GM10248 (cell line): ENCODE measurements at regions of chr12 and their contacts with region 1.

Region 1: DNA sequence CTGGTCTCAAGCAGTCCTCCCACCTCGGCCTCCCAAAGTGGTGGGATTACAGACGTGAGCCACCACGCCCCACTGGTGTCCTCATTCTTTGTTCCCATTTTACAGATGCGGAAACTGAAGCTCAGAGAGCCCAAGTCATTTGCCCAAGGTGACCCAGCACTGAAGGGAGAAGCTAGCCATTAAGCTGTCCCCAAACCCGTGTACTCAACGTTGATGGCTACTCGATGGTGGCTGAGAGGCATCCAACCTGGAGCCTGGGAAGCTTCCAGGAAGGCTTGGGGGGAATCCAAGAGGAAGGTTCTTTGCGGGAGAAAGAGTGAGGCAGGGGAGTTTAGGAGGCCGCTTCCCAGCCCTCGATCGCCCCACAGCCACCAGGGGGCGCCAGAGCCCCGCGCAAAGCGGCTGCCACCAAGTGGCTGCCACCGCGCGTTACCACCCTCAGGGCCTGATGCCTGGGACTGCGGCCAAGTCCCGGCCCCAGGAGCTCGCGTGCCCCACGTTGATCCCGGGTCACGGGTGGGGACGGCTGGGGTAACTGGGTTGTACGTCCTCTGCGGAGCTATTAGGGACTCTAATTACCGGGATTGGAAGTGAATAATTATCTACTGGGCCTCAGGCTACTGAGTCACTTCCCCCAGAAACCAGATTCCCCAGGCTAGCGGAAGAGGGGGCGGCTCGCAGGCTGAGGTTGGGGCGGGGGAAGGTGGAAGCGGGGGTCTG is 8.8 kb upstream of the SH2B3 start:
- DNase-seq: peak; percentile 87
- CTCF ChIP-seq: peak; percentile 99

Region 2: DNA sequence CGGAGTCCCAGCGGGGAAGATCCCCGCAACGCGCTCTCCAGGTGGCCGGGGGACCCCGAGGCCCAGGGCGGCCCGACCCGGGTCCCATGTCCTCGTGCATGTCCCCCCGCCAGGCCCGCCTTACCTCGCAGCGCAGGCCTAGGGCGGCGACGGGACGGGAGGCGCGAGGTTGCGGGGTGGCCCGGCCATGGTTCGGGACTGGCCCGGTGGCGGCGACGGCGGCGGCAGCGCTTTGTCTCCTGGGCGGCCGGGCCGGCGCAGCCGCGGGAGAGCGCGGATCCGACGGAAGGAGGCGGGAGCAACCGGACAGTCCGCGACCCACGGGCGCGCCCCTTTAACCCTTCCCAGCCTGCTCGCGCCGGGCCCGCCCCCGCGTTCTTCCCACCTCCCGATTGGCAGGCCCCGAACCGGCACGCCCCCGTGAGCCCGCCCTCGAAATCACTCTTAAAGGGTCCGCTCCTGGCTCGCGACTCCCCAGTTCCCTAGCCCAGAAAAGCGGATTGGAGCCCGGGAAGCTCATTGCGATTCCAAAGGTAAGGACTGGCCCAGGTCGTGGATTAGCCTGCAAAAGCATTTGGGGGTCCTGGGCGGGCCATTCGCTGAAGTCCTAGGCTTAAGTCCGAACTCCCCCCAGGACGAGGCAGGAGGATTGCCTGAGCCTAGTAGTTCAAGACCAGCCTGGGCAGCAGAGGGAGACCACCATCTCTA is 27.9 kb before region 1 on chr12 and contains the start of gene PHETA1:
- CTCF ChIA-PET with region 1: interaction called, 30 read pairs
- POLR2A ChIA-PET with region 1: no interaction called
- DNase-seq: peak; percentile 94
- CTCF ChIP-seq: no peak

Region 3: GRCh38 chr12:111386885-111387284 is 10.0 kb before region 1 on chr12:
- CTCF ChIA-PET with region 1: interaction called, 28 read pairs
- POLR2A ChIA-PET with region 1: no interaction called
- DNase-seq: no peak
- CTCF ChIP-seq: no peak

Region 4: DNA sequence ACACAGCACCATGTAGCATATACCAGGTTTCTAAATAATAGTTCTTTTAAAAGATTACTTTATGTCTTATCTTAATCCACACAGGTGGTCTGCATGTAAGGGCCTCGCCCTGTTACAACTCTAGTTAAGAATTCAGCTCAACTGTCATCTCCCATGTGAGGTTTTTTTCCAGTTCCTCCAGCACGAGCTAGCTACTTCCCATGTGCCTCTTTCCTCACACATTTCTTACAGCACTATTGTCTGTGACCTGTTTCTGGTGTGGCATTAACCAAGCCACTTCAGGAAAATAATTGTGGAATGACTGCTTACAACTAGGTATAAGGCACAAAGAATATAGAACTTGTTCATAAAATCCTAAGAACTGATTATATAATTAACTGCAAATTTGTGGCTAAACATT is 74.3 kb after region 1 on chr12:
- CTCF ChIA-PET with region 1: interaction called, 34 read pairs
- POLR2A ChIA-PET with region 1: no interaction called
- DNase-seq: no peak
- CTCF ChIP-seq: no peak

Region 5: GRCh38 chr12:111488271-111488670 is 91.4 kb after region 1 on chr12:
- CTCF ChIA-PET with region 1: interaction called, 34 read pairs
- POLR2A ChIA-PET with region 1: no interaction called
- DNase-seq: no peak
- CTCF ChIP-seq: no peak

Region 6: DNA sequence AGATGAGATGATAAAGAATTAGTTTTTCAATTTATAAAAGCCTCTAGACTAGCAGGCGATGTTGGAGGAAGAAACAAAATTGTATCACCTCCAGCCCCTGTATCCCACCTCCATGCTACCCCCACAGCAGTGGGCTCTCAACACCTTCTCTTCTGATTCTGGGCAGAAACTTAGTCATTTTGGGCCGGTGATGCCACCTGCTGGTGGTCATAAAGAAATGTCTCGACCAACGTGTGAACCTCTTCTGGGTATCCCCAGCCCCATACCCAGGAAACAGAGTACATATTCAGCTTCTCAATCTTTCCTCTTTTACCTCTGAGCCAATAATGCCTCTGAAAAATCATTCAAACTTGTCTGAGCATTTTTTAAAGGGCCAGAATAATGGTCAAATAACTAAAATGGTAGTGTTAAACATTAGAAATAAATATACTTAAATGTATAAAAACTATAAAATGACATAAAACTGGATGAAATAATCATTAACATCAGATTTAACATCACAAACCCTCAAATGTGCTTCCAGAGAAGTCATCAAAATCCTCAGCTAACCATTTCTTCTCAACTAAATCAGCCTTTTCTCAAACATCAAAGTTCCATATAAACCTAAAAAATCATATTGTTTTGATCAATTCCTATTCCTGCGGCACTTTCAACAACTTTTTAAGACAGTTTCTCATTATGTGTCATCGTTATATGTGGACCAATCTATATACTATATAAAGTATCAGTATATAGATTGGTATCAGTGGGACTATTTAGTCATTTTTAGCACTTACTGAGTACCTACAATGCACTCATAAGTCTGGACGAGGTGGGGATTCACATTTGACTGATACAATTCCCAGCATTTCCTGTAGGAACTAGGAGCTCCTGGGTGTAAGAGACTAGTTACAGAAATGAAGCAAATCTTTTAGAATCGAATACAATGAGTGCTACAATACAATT is 132.8 kb after region 1 on chr12:
- CTCF ChIA-PET with region 1: interaction called, 42 read pairs
- POLR2A ChIA-PET with region 1: no interaction called
- DNase-seq: peak; percentile 81
- CTCF ChIP-seq: peak; percentile 67

Region 7: DNA sequence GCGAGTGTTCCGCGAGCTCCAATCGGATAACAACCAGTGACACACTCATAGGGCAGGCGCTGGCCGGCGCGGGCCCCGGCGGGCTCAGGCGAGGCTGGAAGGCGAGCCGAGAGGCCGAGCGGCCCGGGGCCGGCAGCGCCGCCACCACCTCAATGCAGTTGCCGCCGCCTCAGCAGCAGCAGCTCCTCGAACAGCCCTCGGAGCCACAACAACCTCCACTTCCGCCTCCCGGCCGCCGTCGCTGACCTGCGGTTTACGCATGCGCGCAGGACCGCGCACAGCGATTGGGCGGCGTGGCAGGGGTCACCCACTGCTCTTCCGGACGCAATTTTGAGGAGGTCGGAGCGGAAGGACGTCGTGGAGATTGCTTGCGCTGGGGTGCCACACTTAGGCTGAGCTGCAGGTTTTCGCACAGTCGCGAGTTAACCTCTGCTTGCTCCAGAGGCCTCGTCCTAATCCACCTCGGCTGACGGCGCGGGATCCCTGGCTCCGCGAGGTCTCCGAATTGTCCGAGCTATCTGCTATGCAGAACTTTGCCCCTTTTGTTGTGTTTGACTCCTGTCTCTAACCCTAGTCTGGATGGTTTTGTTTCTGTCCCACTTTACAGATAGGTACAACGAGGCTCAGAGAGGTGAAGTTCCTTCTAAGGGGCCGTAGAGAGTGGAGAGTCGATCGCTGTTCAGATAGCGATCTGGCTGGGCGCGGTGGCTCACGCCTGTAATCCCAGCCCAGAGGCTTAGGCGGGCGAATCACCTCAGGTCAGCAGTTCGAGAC is 289.0 kb after region 1 on chr12 and contains the starts of genes ACAD10 and BRAP:
- CTCF ChIA-PET with region 1: interaction called, 13 read pairs
- POLR2A ChIA-PET with region 1: no interaction called
- DNase-seq: peak; percentile 99
- CTCF ChIP-seq: no peak